ENCODE measurements at regions of chr12 and their contacts with region 1.

Region 1: GRCh38 chr12:98572010-98572409 is 21.5 kb upstream of the SLC25A3 start:
- DNase-seq: no peak
- H3K4me3 ChIP-seq: no peak overlapping the region
- H3K27ac ChIP-seq: no peak overlapping the region
- H3K27me3 ChIP-seq: no peaks in the 10 kb centered on the region
- CTCF ChIP-seq: peak; percentile 41

Region 2: GRCh38 chr12:96698521-96698920 is 1873.5 kb before region 1 on chr12:
- CTCF ChIA-PET with region 1: interaction called, 14 read pairs
- POLR2A ChIA-PET with region 1: no interaction called
- DNase-seq: no peak
- H3K4me3 ChIP-seq: no peak overlapping the region
- H3K27ac ChIP-seq: no peak overlapping the region
- H3K27me3 ChIP-seq: no peaks in the 10 kb centered on the region
- CTCF ChIP-seq: peak; percentile 25

Region 3: DNA sequence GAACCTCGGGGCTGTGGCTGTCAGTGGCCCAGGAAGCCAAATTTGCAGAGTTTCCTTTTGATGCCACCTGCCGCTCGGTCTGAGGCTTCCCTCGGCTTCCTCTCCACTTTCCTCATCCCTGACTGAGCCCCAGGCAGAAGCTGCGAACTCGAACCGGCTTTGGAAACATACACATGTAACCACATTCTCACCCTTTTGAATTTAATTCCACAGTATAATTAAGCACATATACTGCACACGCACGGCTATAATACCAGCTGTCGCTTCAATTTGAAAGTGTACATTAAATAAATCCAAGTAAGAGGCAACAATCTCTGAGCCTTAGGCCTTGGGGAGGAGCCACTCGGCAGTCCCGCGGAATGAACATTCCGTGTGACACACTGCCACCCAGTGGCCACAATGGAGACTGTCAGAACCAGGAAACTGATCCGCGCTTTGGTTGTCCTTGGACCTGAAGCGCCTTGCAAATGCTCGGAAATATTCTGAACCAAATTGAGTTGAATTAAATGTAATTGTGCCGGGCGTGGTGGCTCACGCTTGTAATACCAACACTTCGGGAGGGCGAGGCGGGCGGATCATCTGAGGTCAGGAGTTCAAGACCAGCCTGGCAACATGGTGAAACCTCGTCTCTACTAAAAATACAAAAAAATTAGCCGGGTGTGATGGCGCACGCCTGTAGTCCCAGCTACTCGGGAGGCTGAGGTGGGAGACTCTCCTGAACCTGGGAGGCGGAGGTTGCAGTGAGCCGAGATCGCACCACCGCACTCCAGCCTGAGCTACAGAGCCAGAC is 174.5 kb before region 1 on chr12:
- CTCF ChIA-PET with region 1: no interaction called
- POLR2A ChIA-PET with region 1: no interaction called
- DNase-seq: peak; percentile 30
- H3K4me3 ChIP-seq: peak overlapping the region; percentile 55
- H3K27ac ChIP-seq: no peak overlapping the region
- H3K27me3 ChIP-seq: peaks cover under 1% of the 10 kb centered on the region
- CTCF ChIP-seq: peak; percentile 86

Region 4: DNA sequence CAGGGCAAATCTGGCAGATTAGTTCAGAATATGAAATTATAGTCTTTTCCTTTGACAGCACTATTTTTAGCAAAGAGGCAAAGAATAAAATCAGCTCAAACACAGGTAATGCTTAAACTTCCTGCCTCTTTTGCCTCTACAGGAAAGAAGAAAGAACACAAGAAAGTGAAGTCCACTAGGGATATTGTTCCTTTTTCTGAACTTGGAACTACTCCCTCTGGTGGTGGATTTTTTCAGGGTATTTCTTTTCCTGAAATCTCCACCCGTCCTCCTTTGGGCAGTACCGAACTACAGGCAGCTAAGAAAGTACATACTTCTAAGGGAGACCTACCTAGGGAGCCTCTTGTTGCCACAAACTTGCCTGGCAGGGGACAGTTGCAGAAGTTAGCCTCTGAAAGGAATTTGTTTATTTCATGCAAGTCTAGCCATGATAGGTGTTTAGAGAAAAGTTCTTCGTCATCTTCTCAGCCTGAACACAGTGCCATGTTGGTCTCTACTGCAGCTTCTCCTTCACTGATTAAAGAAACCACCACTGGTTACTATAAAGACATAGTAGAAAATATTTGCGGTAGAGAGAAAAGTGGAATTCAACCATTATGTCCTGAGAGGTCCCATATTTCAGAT is 39.2 kb before region 1 on chr12:
- CTCF ChIA-PET with region 1: interaction called, 31 read pairs
- POLR2A ChIA-PET with region 1: interaction called, 4 read pairs
- DNase-seq: peak; percentile 23
- H3K4me3 ChIP-seq: no peak overlapping the region
- H3K27ac ChIP-seq: no peak overlapping the region
- H3K27me3 ChIP-seq: no peaks in the 10 kb centered on the region
- CTCF ChIP-seq: peak; percentile 68

Region 5: DNA sequence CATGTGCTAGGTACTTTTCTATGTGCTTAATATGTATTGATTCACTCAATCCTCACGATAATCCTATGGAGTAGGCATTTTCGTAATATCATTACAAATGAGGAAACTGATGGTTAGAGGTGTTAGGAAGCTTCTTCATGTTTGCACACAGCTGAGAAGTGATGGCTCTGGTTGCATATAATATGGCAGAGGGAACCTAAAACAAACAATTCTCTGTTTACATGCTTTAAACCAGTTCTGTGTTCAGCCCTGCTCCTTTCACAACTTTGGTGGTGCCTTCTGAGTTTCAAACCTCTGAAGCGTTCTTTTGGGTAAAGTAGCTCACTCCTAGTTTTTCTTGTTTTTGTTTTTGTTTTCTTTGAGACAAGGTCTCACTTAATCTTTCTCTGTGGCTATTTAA is 21.2 kb before region 1 on chr12:
- CTCF ChIA-PET with region 1: interaction called, 58 read pairs
- POLR2A ChIA-PET with region 1: interaction called, 4 read pairs
- DNase-seq: no peak
- H3K4me3 ChIP-seq: no peak overlapping the region
- H3K27ac ChIP-seq: no peak overlapping the region
- H3K27me3 ChIP-seq: no peaks in the 10 kb centered on the region
- CTCF ChIP-seq: no peak

Region 6: GRCh38 chr12:98593351-98594049 is 21.5 kb after region 1 on chr12 and contains the start of gene SLC25A3:
- CTCF ChIA-PET with region 1: interaction called, 59 read pairs
- POLR2A ChIA-PET with region 1: interaction called, 9 read pairs
- DNase-seq: peak; percentile 98
- H3K4me3 ChIP-seq: peak within 1 kb of the TSS; percentile 99
- H3K27ac ChIP-seq: peak within 1 kb of the TSS; percentile 92
- H3K27me3 ChIP-seq: no peaks in the 10 kb centered on the region
- CTCF ChIP-seq: no peak
- polyA plus RNA-seq, gene SLC25A3: 974 and 1,138 TPM in 2 replicates

Region 7: DNA sequence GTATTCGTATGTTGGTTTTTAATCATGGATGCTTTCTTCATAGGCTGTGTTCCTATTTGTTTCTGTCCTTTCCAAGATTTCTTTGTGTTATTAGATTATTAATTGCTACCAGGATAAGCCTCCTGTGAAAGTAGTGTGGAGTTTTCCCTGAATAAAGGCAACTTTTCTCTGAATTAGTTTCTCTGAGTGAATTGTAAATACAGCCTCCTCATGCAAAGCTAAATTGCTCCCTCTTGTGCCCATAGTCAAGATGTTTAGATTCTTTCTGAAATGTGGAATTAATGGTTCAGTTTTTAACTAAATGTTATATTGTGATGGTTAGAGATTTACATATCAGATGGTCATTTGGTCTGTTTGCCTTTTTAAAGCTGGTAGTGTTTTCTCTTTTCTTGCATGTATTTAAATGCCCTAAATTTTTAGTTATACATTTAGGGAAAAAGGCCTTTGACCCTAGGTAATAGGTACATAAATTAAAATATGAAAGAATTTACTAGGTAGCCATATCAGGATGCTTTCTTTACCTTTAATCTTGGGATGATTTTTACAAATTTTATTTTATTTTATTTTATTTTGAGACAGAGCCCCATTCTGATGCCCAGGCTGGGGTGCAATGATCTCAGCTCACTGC is 82.0 kb after region 1 on chr12:
- CTCF ChIA-PET with region 1: interaction called, 127 read pairs
- POLR2A ChIA-PET with region 1: no interaction called
- DNase-seq: peak; percentile 34
- H3K4me3 ChIP-seq: no peak overlapping the region
- H3K27ac ChIP-seq: no peak overlapping the region
- H3K27me3 ChIP-seq: no peaks in the 10 kb centered on the region
- CTCF ChIP-seq: peak; percentile 72